Heart right ventricle (tissue), 16 donors: ENCODE measurements at regions of chr3 and their contacts with region 1.

Region 1: GRCh38 chr3:30628901-30629590 is 22.6 kb downstream of the TGFBR2 start:
- DNase-seq: peak in 1 of 2 donors; percentile 51
- ATAC-seq: peak; percentile 59 to 87 (median 65)
- H3K4me3 ChIP-seq: no peak overlapping the region
- H3K27ac ChIP-seq: peak overlapping the region; percentile 11 to 86 (median 66)
- H3K4me1 ChIP-seq: peaks cover 30 to 100% (median 100%) of the 10 kb centered on the region in 9 donors
- H3K27me3 ChIP-seq: no peaks in the 10 kb centered on the region
- CTCF ChIP-seq: peak in 7 of 9 donors; percentile 31 to 63 (median 50)

Region 2: GRCh38 chr3:30658328-30659052 is 29.4 kb after region 1 on chr3:
- intact Hi-C with region 1: loop called in 1 of 10 experiments (anchors 5 kb)
- DNase-seq: peak in 1 of 2 donors; percentile 50
- ATAC-seq: peak; percentile 45 to 75 (median 69)
- H3K4me3 ChIP-seq: peak overlapping the region in 1 of 10 donors; percentile 16
- H3K27ac ChIP-seq: peak overlapping the region; percentile 20 to 82 (median 69)
- H3K4me1 ChIP-seq: peaks cover 18 to 100% (median 96%) of the 10 kb centered on the region in 9 donors
- H3K27me3 ChIP-seq: no peaks in the 10 kb centered on the region
- CTCF ChIP-seq: peak in 3 of 9 donors; percentile 23 to 29 (median 24)

Region 3: DNA sequence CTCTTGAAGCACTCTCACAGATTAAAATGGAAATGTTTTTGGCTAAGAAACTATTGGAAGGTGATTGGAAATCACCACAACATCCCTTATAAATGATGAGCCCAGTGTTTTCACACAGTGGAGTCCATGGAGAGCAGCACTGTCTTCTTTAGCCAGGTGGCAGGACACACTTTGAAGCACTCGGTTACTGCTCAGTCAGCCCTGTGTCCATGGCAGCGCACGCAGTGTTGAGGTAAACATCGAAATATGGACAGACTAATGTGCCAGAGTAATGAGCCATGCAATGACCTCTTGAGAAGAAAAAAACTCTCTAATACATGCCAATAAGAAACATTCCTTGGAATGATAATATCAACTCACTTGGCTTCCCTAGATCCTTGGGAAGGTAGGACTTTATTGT is 43.9 kb after region 1 on chr3:
- intact Hi-C with region 1: loop called in 1 of 10 experiments (anchors 10 kb)
- DNase-seq: no peak
- ATAC-seq: peak in 6 of 8 donors; percentile 31 to 84 (median 42)
- H3K4me3 ChIP-seq: no peak overlapping the region
- H3K27ac ChIP-seq: peak overlapping the region in 4 of 10 donors; percentile 4 to 59 (median 20)
- H3K4me1 ChIP-seq: peaks cover 8 to 75% (median 52%) of the 10 kb centered on the region in 9 donors
- H3K27me3 ChIP-seq: no peaks in the 10 kb centered on the region
- CTCF ChIP-seq: no peak

Region 4: GRCh38 chr3:30681643-30682211 is 52.7 kb after region 1 on chr3:
- intact Hi-C with region 1: loop called in 3 of 10 experiments (anchors 5 to 10 kb)
- DNase-seq: peak; percentile 57 to 64
- ATAC-seq: peak; percentile 55 to 75 (median 66)
- H3K4me3 ChIP-seq: peak overlapping the region in 1 of 10 donors; percentile 20
- H3K27ac ChIP-seq: peak overlapping the region; percentile 51 to 83 (median 67)
- H3K4me1 ChIP-seq: peaks cover 17 to 97% (median 89%) of the 10 kb centered on the region in 9 donors
- H3K27me3 ChIP-seq: no peaks in the 10 kb centered on the region
- CTCF ChIP-seq: no peak

Region 5: DNA sequence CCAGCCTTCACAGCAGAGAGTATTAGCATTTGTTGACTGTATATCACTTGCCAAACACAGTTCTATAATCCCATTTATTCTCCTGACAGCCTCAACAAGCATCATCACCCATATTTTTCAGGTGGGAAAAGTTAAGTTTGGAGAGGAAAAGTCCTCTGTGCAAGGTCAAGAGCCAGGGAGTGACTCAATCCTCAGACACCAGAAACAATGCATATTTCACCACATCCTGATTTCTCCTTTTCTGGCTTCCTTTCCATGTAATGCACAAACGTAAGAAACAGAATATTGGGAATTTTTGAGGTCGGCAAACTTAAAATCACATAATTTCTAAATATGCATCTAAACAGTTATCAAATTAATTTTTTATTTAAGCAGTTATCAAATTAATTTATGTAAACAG is 381.4 kb after region 1 on chr3:
- intact Hi-C with region 1: no loop called
- DNase-seq: no peak
- ATAC-seq: no peak
- H3K4me3 ChIP-seq: no peak overlapping the region
- H3K27ac ChIP-seq: no peak overlapping the region
- H3K4me1 ChIP-seq: peaks cover 0 to 16% (median 0%) of the 10 kb centered on the region in 9 donors
- H3K27me3 ChIP-seq: no peaks in the 10 kb centered on the region
- CTCF ChIP-seq: no peak